Transverse colon (tissue), 4 donors: ENCODE measurements at regions of chr9 and their contacts with region 1.

Region 1: DNA sequence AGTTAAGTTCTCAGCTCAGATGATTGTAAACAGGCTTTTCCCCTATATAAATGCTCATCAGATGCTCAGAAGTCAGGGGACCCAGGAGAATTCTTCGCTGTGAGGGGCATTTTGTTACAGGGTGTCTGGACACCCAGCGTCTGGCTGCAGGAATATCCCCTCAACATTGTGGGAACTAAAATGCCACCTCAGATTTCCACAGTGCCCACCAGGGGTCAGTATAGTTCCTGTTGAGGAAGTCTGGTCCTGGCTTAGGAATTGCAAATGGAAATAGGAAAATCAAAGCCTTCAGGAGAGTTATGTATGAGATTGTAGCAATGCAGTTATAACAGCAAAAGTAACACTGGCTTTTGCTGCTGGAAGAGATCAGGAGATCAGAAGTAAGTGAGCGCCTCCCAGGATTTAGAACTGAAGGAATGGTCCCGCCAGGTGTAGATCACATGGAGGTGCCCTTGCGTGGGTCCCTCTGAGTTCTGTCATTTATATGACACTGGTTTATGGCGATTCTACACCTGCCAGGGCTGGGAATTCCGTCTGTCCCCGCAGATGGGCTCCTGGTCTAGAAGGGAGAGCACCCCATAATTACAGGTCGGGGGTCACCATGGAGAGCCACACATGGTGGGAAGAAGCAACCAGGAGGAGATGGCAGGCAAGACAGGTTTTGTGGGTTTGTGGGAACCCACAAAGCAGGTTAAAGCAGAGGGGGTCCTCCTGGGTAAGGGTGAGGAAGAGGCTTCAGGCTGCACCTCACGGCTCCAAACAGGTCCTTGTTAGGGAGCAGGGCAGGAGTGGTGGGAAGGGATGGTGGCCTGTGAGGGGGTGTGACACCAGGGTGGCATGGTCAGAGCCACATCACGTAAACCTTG is 47.0 kb upstream of the CTSL start:
- DNase-seq: peak; percentile 57
- H3K4me3 ChIP-seq: no peak overlapping the region
- H3K27ac ChIP-seq: no peak overlapping the region
- H3K4me1 ChIP-seq: peaks cover 0 to 5% (median 0%) of the 10 kb centered on the region in 4 donors
- H3K27me3 ChIP-seq: no peaks in the 10 kb centered on the region
- CTCF ChIP-seq: peak; percentile 74 to 80 (median 77)
- EP300 ChIP-seq: no peak
- POLR2A ChIP-seq: no peak

Region 2: GRCh38 chr9:87336914-87337333 is 342.0 kb before region 1 on chr9:
- in situ Hi-C with region 1: loop called in 1 of 4 experiments (anchors 10 kb)
- intact Hi-C with region 1: no loop called
- DNase-seq: no peak
- H3K4me3 ChIP-seq: peak overlapping the region; percentile 9 to 36 (median 17)
- H3K27ac ChIP-seq: no peak overlapping the region
- H3K4me1 ChIP-seq: peaks cover 0 to 12% (median 5%) of the 10 kb centered on the region in 4 donors
- H3K27me3 ChIP-seq: peaks cover 18% of the 10 kb centered on the region
- CTCF ChIP-seq: peak; percentile 66 to 81 (median 74)
- EP300 ChIP-seq: no peak
- POLR2A ChIP-seq: no peak

Region 3: DNA sequence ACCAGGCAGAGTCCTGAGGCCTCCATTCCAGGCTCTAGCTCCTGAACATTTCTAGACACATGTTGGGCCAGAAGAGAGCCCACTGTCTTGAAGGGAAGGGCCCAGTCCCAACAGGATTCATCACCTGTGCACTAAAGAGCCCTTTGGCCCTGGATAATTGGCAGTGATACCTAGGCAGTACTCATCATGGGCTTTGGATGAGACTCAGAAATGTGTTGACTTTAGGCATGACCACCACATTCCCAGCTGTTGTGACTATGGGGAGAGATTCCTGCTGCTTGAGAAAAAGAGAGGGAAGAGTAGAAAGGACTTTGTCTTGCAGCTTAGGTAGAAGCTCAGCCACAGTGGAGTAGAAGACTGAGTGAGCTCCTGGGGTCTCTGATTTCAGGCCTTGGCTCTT is 319.6 kb before region 1 on chr9:
- in situ Hi-C with region 1: no loop called
- intact Hi-C with region 1: no loop called
- DNase-seq: no peak
- H3K4me3 ChIP-seq: no peak overlapping the region
- H3K27ac ChIP-seq: no peak overlapping the region
- H3K4me1 ChIP-seq: no peaks in the 10 kb centered on the region
- H3K27me3 ChIP-seq: no peaks in the 10 kb centered on the region
- CTCF ChIP-seq: no peak
- EP300 ChIP-seq: no peak
- POLR2A ChIP-seq: no peak

Region 4: DNA sequence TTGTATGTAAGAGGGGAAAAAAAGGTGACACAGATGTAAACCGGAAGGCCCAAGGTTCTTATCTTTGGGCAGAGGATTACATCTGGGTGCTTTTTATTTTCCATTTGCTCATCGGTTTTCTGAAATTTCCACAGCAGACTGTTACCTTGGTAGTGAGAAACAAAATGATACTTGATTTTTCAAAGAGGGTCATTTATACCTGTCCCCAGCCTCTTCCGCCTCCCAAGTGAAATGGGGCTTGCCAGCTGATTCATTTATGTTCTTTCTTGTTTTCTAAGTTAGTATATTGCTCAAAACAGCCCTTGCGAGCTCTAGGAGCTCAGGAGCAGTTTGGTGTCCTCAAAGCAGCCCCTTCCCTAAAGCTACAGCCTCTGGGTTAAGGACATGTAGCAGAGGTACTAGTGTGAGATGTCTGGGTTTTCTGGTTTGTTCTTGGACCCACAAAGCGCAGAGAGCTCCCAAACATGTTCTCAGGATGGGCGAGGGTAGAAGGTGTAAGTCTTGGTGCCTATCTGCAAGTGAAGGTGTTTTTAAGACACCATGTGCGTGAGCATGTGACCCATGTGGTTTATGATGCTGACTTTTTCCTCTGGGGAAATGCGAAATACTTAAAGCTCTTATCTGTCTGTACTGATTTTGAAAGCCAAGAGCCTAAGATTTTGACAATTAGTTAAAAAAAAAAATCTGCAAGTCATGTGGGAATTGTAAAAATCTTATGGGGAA is 142.9 kb before region 1 on chr9:
- in situ Hi-C with region 1: no loop called
- intact Hi-C with region 1: no loop called
- DNase-seq: no peak
- H3K4me3 ChIP-seq: no peak overlapping the region
- H3K27ac ChIP-seq: no peak overlapping the region
- H3K4me1 ChIP-seq: peaks cover 0 to 9% (median 0%) of the 10 kb centered on the region in 4 donors
- H3K27me3 ChIP-seq: no peaks in the 10 kb centered on the region
- CTCF ChIP-seq: no peak
- EP300 ChIP-seq: no peak
- POLR2A ChIP-seq: no peak

Region 5: GRCh38 chr9:87812375-87813118 is 133.7 kb after region 1 on chr9:
- in situ Hi-C with region 1: loop called in 2 of 4 experiments (anchors 5 to 10 kb)
- intact Hi-C with region 1: loop called (anchors 5 kb)
- DNase-seq: no peak
- H3K4me3 ChIP-seq: no peak overlapping the region
- H3K27ac ChIP-seq: no peak overlapping the region
- H3K4me1 ChIP-seq: peaks cover 0 to 3% (median 0%) of the 10 kb centered on the region in 4 donors
- H3K27me3 ChIP-seq: no peaks in the 10 kb centered on the region
- CTCF ChIP-seq: peak; percentile 55 to 66 (median 65)
- EP300 ChIP-seq: no peak
- POLR2A ChIP-seq: no peak

Region 6: GRCh38 chr9:88007206-88007631 is 328.3 kb after region 1 on chr9:
- in situ Hi-C with region 1: no loop called
- intact Hi-C with region 1: no loop called
- DNase-seq: no peak
- H3K4me3 ChIP-seq: no peak overlapping the region
- H3K27ac ChIP-seq: no peak overlapping the region
- H3K4me1 ChIP-seq: peaks cover 0 to 4% (median 2%) of the 10 kb centered on the region in 4 donors
- H3K27me3 ChIP-seq: no peaks in the 10 kb centered on the region
- CTCF ChIP-seq: no peak
- EP300 ChIP-seq: no peak
- POLR2A ChIP-seq: no peak

Region 7: DNA sequence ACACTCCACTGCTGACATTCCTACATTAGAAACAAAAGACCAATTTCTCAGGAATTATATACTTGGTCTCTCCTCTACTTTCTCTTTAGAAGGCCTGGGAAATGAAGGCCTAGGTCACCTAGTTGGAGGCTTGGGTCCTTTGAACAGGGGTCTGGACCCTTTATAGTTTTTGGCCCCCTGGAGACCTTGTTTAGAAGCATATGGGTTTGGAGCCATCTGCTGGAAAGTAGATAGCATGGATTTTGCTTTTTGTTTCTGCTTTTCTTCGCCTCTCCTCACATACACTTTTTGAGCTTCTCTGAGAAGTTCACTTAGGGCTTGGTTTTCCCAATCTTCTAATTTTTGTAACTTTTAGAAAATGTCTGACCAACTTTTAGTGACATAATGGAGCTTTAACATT is 362.6 kb after region 1 on chr9:
- in situ Hi-C with region 1: loop called in 3 of 4 experiments (anchors 25 kb)
- intact Hi-C with region 1: loop called (anchors 10 kb)
- DNase-seq: no peak
- H3K4me3 ChIP-seq: no peak overlapping the region
- H3K27ac ChIP-seq: no peak overlapping the region
- H3K4me1 ChIP-seq: no peaks in the 10 kb centered on the region
- H3K27me3 ChIP-seq: no peaks in the 10 kb centered on the region
- CTCF ChIP-seq: peak; percentile 25 to 55 (median 40)
- EP300 ChIP-seq: no peak
- POLR2A ChIP-seq: no peak

Region 8: GRCh38 chr9:88578121-88579054 is 899.5 kb after region 1 on chr9:
- in situ Hi-C with region 1: loop called in 1 of 4 experiments (anchors 25 kb)
- intact Hi-C with region 1: no loop called
- DNase-seq: peak; percentile 85
- H3K4me3 ChIP-seq: peak overlapping the region in 1 of 4 donors; percentile 18
- H3K27ac ChIP-seq: no peak overlapping the region
- H3K4me1 ChIP-seq: peaks cover 0 to 6% (median 1%) of the 10 kb centered on the region in 4 donors
- H3K27me3 ChIP-seq: no peaks in the 10 kb centered on the region
- CTCF ChIP-seq: peak; percentile 90 to 98 (median 98)
- EP300 ChIP-seq: no peak
- POLR2A ChIP-seq: no peak

Region 9: GRCh38 chr9:88991066-88992034 is 1312.5 kb after region 1 on chr9 and contains the start of gene S1PR3:
- in situ Hi-C with region 1: loop called in 1 of 4 experiments (anchors 25 kb)
- intact Hi-C with region 1: no loop called
- DNase-seq: peak; percentile 31
- H3K4me3 ChIP-seq: peak within 1 kb of the TSS; percentile 3 to 72 (median 48)
- H3K27ac ChIP-seq: peak within 1 kb of the TSS; percentile 74 to 84 (median 80)
- H3K4me1 ChIP-seq: peaks cover 3 to 42% (median 6%) of the 10 kb centered on the region in 4 donors
- H3K27me3 ChIP-seq: peaks cover 35% of the 10 kb centered on the region
- CTCF ChIP-seq: peak in 1 of 5 experiments; percentile 8
- EP300 ChIP-seq: no peak
- POLR2A ChIP-seq: no peak
- total RNA-seq, gene S1PR3: 2.0 to 13.5 (median 8.3) TPM

Region 10: DNA sequence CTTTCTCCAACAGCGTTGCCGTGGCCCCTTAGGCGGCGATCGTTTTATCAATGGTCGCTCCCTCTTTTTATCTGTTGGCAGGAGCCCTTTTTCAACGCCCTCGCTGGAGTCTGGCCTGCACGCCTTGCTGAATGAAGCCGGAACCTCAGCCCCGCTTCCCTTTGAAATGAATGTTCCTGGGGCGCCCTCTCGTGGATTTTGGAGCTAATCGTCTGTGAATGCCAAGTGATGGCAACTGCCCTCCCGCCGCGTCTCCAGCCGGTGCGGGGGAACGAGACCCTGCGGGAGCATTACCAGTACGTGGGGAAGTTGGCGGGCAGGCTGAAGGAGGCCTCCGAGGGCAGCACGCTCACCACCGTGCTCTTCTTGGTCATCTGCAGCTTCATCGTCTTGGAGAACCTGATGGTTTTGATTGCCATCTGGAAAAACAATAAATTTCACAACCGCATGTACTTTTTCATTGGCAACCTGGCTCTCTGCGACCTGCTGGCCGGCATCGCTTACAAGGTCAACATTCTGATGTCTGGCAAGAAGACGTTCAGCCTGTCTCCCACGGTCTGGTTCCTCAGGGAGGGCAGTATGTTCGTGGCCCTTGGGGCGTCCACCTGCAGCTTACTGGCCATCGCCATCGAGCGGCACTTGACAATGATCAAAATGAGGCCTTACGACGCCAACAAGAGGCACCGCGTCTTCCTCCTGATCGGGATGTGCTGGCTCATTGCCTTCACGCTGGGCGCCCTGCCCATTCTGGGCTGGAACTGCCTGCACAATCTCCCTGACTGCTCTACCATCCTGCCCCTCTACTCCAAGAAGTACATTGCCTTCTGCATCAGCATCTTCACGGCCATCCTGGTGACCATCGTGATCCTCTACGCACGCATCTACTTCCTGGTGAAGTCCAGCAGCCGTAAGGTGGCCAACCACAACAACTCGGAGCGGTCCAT is 1322.4 kb after region 1 on chr9:
- in situ Hi-C with region 1: loop called in 2 of 4 experiments (anchors 25 kb)
- intact Hi-C with region 1: no loop called
- DNase-seq: peak; percentile 86
- H3K4me3 ChIP-seq: no peak overlapping the region
- H3K27ac ChIP-seq: peak overlapping the region; percentile 6 to 52 (median 38)
- H3K4me1 ChIP-seq: peaks cover 7 to 24% (median 11%) of the 10 kb centered on the region in 4 donors
- H3K27me3 ChIP-seq: no peaks in the 10 kb centered on the region
- CTCF ChIP-seq: peak; percentile 67 to 79 (median 74)
- EP300 ChIP-seq: no peak
- POLR2A ChIP-seq: no peak